GM12878 (cell line): ENCODE measurements at regions of chr13 and their contacts with region 1.

Region 1: DNA sequence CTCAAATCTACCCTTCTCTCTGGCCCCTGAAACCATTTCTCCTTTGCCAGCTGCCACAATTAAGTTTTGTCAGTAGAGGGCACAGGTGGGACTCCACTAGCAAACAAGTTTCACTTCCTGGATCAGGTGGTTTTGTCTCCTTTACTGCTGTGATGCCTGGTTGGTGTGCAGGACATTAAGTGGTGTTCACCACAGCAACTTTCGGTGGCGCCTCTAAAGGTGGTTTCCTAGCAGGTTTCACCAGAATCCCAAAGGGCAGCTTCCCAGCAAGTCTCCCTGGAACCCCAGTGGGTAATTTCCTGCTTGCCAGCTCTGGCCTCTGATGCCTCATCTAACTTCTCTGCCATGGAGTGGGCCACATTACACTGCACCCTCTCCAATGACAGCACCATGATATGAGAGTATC is 16.6 kb downstream of the MED4 start:
- DNase-seq: peak; percentile 68
- ATAC-seq: peak; percentile 100
- H3K4me3 ChIP-seq: no peak overlapping the region
- H3K27ac ChIP-seq: peak overlapping the region; percentile 61
- H3K4me1 ChIP-seq: peaks cover 7% of the 10 kb centered on the region
- H3K27me3 ChIP-seq: no peaks in the 10 kb centered on the region
- CTCF ChIP-seq: peak; percentile 48 to 59 (median 57); a peak in 5 of 6 replicates
- EP300 ChIP-seq: peak in 1 of 2 experiments; percentile 22; a peak in 1 of 4 replicates
- POLR2A ChIP-seq: no peak
- RAD21 ChIP-seq: peak; percentile 40; the same call in 1 of the 2 replicates

Region 2: GRCh38 chr13:47794963-47795362 is 283.3 kb before region 1 on chr13:
- CTCF ChIA-PET with region 1: interaction called, 3 read pairs
- POLR2A ChIA-PET with region 1: no interaction called
- RAD21 ChIA-PET with region 1: no interaction called
- SMC1A ChIA-PET with region 1: no interaction called
- in situ Hi-C with region 1: no loop called
- intact Hi-C with region 1: loop called (anchors 10 kb)
- DNase-seq: no peak
- ATAC-seq: peak; percentile 52
- H3K4me3 ChIP-seq: no peak overlapping the region
- H3K27ac ChIP-seq: no peak overlapping the region
- H3K4me1 ChIP-seq: no peaks in the 10 kb centered on the region
- H3K27me3 ChIP-seq: no peaks in the 10 kb centered on the region
- CTCF ChIP-seq: peak; percentile 20 to 55 (median 52); a peak in 4 of 6 replicates
- EP300 ChIP-seq: no peak
- POLR2A ChIP-seq: no peak
- RAD21 ChIP-seq: no peak

Region 3: DNA sequence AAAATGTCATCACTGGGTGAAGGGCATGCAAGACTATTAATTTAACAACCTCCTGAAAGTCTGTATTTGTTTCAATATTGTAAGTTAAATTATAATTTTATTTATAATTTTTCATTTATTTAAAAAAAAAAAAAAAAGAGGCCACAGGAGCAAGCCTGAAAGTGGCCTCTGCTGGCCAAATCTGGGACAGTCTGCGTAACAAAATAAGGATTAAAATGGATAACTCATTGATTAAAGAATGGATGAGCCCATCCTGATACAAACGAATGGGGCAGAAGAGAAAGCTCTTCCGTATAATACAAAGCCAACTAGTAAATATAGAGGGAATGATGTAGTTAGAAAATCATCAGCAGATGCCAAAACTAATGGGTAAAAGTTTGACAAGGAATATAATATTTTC is 113.4 kb before region 1 on chr13:
- CTCF ChIA-PET with region 1: no interaction called
- POLR2A ChIA-PET with region 1: no interaction called
- RAD21 ChIA-PET with region 1: no interaction called
- SMC1A ChIA-PET with region 1: no interaction called
- in situ Hi-C with region 1: no loop called
- intact Hi-C with region 1: no loop called
- DNase-seq: no peak
- ATAC-seq: no peak
- H3K4me3 ChIP-seq: no peak overlapping the region
- H3K27ac ChIP-seq: no peak overlapping the region
- H3K4me1 ChIP-seq: no peaks in the 10 kb centered on the region
- H3K27me3 ChIP-seq: no peaks in the 10 kb centered on the region
- CTCF ChIP-seq: no peak
- EP300 ChIP-seq: no peak
- POLR2A ChIP-seq: no peak
- RAD21 ChIP-seq: no peak

Region 4: DNA sequence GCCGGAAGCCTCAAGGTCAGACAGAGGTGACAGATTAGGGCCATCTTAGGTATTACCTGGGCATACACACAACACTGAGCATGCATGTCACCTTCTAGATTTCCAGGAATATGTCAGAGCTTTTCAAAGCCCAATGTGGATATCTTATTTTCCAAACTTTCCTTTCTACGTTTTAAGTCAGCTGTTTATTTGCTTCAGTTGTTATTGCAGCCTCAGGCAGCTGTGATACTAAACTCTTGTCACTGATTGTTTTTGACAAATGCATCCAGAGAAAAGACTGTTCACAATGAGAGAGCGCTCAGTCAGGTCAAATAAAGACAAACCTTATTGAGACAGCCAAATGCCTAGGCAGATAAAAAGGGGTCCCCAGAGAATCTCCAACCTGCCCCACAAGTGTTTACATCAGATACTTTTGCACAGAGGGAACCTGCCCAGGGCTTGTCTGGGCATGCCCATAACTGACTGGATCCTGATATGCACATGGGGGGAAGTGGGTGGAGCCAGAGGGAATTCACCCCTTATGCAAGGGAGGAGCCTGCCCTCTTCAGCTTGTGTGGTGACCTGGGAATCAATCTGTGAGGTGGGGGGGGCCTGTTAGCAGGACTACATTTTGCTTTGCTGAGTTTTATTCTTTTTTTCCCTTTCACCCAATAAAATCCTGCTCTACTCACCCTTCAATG is 11.8 kb before region 1 on chr13:
- CTCF ChIA-PET with region 1: interaction called, 7 read pairs
- POLR2A ChIA-PET with region 1: interaction called, 3 read pairs
- RAD21 ChIA-PET with region 1: no interaction called
- SMC1A ChIA-PET with region 1: interaction called, 11 read pairs
- in situ Hi-C with region 1: no loop called
- intact Hi-C with region 1: no loop called
- DNase-seq: peak; percentile 42
- ATAC-seq: peak; percentile 96
- H3K4me3 ChIP-seq: no peak overlapping the region
- H3K27ac ChIP-seq: peak overlapping the region; percentile 47
- H3K4me1 ChIP-seq: peaks cover 4% of the 10 kb centered on the region
- H3K27me3 ChIP-seq: no peaks in the 10 kb centered on the region
- CTCF ChIP-seq: no peak
- EP300 ChIP-seq: no peak
- POLR2A ChIP-seq: no peak
- RAD21 ChIP-seq: no peak

Region 5: DNA sequence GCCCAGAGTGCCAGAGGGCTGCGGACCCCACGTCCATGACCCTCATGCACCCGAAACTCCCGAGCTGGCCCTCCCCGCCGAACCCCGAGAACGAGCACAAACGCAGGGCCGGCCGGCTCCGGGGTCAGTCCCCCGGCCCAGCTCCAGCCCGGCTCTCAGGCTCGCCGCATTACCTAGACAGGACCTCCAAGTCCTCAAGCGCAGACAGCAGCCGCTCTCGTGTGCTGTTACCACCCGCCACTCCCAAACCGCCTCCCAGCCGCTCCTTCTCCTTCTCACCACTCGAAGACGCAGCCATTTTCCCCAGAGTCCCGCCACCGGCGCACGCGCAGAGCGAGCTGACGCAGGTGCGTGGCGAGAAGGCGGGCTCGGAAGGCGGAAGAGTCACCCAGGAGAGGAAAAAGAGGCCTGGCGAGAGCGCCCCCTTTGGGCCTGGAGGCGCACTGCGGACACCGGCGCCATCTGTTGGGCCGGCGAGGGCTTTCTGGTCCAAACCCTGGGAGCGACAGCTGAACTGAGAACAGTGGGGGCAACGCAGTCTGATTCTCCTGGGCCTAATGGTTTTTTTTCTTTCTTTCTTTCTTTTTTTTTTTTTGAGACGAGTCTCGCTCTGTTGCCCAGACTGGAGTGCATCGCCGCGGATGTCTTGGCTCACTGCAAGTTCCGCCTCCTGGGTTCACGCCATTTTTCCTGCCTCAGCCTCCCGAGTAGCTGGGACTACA is 16.7 kb after region 1 on chr13 and contains the start of gene MED4:
- CTCF ChIA-PET with region 1: interaction called, 37 read pairs
- POLR2A ChIA-PET with region 1: interaction called, 3 read pairs
- RAD21 ChIA-PET with region 1: interaction called, 12 read pairs
- SMC1A ChIA-PET with region 1: interaction called, 5 read pairs
- in situ Hi-C with region 1: no loop called
- intact Hi-C with region 1: no loop called
- DNase-seq: peak; percentile 79
- ATAC-seq: peak; percentile 95
- H3K4me3 ChIP-seq: peak within 1 kb of the TSS; percentile 80
- H3K27ac ChIP-seq: peak within 1 kb of the TSS; percentile 64
- H3K4me1 ChIP-seq: no peaks in the 10 kb centered on the region
- H3K27me3 ChIP-seq: no peaks in the 10 kb centered on the region
- CTCF ChIP-seq: peak; percentile 99 to 100 (median 99); a peak in 5 of 6 replicates
- EP300 ChIP-seq: no peak
- POLR2A ChIP-seq: peak; percentile 96
- RAD21 ChIP-seq: peak; percentile 51
- polyA plus RNA-seq, gene MED4: 103 to 117 TPM

Region 6: DNA sequence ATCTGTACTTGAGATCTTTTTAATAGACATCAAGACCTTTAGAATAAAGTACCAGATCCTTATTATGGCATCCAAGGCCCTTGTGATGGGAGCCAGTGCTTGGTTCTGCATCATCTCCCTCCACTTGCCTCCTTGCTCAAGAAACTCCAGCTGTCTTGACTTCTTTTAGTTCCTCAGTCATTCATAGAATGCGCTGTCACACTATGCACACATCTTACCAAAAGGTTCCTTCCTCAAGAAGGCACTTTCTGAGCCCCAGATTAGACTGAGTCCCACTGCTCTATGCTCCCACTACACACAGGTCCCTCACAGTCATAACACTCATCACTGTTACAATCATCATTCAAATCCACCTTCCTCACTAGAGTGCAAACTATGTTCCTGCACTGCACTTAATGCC is 96.9 kb after region 1 on chr13:
- CTCF ChIA-PET with region 1: no interaction called
- POLR2A ChIA-PET with region 1: no interaction called
- RAD21 ChIA-PET with region 1: no interaction called
- SMC1A ChIA-PET with region 1: no interaction called
- in situ Hi-C with region 1: no loop called
- intact Hi-C with region 1: no loop called
- DNase-seq: no peak
- ATAC-seq: no peak
- H3K4me3 ChIP-seq: no peak overlapping the region
- H3K27ac ChIP-seq: no peak overlapping the region
- H3K4me1 ChIP-seq: no peaks in the 10 kb centered on the region
- H3K27me3 ChIP-seq: peaks cover 0 to 4% of the 10 kb centered on the region in 2 experiments; a peak in 3 of 4 replicates
- CTCF ChIP-seq: no peak
- EP300 ChIP-seq: no peak
- POLR2A ChIP-seq: no peak
- RAD21 ChIP-seq: no peak